Naive thymus-derived CD8-positive, alpha-beta T cell (primary cell): ENCODE measurements at regions of chr19 and their contacts with region 1.

Region 1: DNA sequence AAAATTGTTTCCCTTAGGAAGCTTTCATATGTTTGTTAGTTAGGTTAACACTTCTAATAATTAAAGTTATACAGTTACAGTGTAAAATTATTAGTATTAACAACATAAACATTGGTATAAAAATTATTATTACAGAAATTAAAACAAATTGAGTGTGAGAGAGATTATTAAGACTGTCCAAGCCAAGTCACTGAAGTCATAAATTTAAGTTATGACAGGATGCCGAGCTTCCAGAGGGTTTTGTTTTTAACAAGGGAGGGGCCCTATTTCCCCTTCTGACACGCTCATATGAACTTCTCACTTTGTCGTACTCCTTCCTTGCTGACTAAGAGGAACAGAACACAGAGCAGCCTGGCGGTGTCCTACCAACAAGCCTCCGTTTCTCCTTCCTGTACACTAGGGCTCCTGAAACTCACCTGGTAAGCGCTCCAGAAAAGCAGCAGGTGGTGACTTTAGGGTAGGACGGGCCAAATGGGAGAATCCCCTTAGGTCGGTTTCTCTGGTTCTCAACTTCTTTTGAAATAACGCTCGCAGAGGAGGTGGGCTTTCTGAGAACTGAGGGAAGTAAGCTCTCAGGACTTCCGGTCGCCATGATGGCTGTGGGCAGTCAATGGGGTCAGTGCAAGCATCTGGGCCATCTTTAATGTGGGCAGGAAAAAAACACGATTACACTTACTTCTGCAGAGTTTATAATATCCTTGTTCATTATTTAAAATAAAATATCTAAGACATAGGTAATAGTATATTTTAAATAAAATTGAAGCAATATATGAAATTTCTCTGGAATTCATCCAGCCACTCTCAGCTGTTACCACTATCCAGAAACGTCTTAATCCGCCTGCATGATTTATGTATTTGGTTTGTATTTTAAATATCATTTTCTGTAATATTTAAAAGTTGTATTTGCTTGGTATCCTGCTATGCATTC is at the start of gene CARD8:
- DNase-seq: peak; percentile 54 to 93 (median 80)
- ATAC-seq: peak; percentile 83 to 89
- H3K4me3 Mint-ChIP-seq: peak within 1 kb of the TSS; percentile 89 to 100 (median 98)
- H3K27ac Mint-ChIP-seq: peak within 1 kb of the TSS; percentile 80 to 100 (median 98)
- H3K4me1 Mint-ChIP-seq: peaks cover 26 to 84% (median 72%) of the 10 kb centered on the region in 4 donors
- H3K27me3 Mint-ChIP-seq: no peaks in the 10 kb centered on the region
- polyA plus RNA-seq, gene CARD8: 73.3 to 104 (median 87.7) TPM

Region 2: GRCh38 chr19:48064509-48064908 is 191.1 kb before region 1 on chr19:
- POLR2A ChIA-PET with region 1: no interaction called
- DNase-seq: no peak
- ATAC-seq: no peak
- H3K4me3 Mint-ChIP-seq: no peak overlapping the region
- H3K27ac Mint-ChIP-seq: no peak overlapping the region
- H3K4me1 Mint-ChIP-seq: peaks cover 0 to 3% (median under 1%) of the 10 kb centered on the region in 4 donors
- H3K27me3 Mint-ChIP-seq: peaks cover 0 to 36% (median 12%) of the 10 kb centered on the region in 5 donors

Region 3: DNA sequence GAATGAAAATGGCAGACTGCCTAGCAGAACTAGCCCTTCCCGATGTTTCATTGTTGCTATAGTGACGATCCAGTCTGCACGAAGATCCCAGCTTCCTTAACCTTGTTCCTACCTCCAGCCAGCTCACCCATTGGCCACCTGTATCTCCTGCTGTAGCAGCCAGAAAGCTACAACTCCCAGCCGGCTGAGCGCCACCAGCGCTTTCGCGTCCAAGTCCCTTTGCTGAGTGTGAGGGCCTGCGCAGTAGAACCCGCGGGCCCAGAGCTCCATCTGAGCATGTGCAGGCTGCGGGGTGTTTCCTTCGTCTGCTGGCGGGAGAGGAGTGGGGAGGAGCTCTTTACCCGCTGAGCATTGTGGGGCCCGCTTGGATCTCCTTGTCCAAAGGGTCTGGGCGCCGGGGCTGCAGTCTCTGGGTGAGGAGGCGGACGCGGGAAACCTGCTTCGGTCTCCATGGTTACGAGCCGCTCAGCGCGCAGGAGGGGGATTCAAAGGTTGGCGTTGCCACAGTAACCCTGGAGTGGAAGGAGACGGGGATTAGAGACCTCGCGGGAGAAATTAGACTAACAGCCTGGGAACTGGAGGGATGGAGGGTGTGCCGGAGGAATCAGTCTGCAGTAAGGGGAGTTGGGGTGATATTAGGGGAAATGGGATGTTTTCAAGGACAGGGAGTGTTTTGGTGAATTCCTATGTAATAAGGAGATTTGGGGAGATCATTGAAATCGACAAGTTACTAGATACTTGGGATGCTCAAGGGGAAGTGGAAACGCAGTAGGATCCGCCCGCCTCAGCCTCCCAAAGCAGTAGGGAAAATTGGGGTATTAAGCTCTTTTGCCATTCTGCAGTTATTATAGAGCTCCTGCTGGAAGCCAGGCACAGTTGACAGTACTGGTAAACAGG is 51.7 kb before region 1 on chr19:
- POLR2A ChIA-PET with region 1: interaction called, 19 read pairs
- DNase-seq: peak; percentile 75 to 93 (median 86)
- ATAC-seq: peak; percentile 98 to 99
- H3K4me3 Mint-ChIP-seq: no peak overlapping the region
- H3K27ac Mint-ChIP-seq: no peak overlapping the region
- H3K4me1 Mint-ChIP-seq: peaks cover 8 to 32% (median 13%) of the 10 kb centered on the region in 4 donors
- H3K27me3 Mint-ChIP-seq: no peaks in the 10 kb centered on the region

Region 4: GRCh38 chr19:48244281-48244680 is 11.4 kb before region 1 on chr19:
- POLR2A ChIA-PET with region 1: interaction called, 23 read pairs
- DNase-seq: peak in 8 of 10 donors; percentile 21 to 59 (median 32)
- ATAC-seq: peak; percentile 97 to 98
- H3K4me3 Mint-ChIP-seq: peak overlapping the region; percentile 55 to 88 (median 77)
- H3K27ac Mint-ChIP-seq: peak overlapping the region; percentile 75 to 96 (median 90)
- H3K4me1 Mint-ChIP-seq: peaks cover 17 to 63% (median 46%) of the 10 kb centered on the region in 4 donors
- H3K27me3 Mint-ChIP-seq: no peaks in the 10 kb centered on the region

Region 5: DNA sequence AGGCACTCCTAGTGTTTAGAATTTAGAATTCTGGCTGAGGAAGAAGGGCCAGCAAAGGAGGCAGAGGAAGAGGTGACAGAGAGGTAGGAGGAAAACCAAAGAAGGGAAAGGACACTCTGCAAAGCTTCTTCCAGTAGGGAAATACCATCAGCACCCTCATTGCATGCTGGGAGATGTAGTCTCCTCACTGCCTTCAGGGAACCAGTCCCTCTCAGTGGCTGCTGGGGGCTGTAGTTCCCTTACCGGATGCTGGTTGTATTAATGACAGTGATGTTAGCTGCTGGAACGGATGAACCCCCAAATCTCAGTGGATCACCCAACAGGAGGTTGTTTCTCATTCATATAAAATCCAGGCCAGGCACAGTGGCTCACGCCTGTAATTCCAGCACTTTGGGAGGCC is 148.0 kb after region 1 on chr19:
- POLR2A ChIA-PET with region 1: no interaction called
- DNase-seq: peak in 5 of 10 donors; percentile 29 to 55 (median 49)
- ATAC-seq: peak; percentile 65 to 78
- H3K4me3 Mint-ChIP-seq: peak overlapping the region in 1 of 10 donors; percentile 28
- H3K27ac Mint-ChIP-seq: peak overlapping the region in 5 of 10 donors; percentile 44 to 87 (median 69)
- H3K4me1 Mint-ChIP-seq: peaks cover 6 to 24% (median 17%) of the 10 kb centered on the region in 4 donors
- H3K27me3 Mint-ChIP-seq: peaks cover 9 to 19% (median 14%) of the 10 kb centered on the region in 5 donors